Aorta (tissue), 5 donors: ENCODE measurements at regions of chr4 and their contacts with region 1.

Region 1: GRCh38 chr4:140326395-140326993 is 47.0 kb upstream of the SCOC start:
- DNase-seq: no peak
- ATAC-seq: no peak
- H3K4me3 ChIP-seq: no peak overlapping the region
- H3K27ac ChIP-seq: no peak overlapping the region
- H3K4me1 ChIP-seq: no peaks in the 10 kb centered on the region
- H3K27me3 ChIP-seq: no peaks in the 10 kb centered on the region

Region 2: DNA sequence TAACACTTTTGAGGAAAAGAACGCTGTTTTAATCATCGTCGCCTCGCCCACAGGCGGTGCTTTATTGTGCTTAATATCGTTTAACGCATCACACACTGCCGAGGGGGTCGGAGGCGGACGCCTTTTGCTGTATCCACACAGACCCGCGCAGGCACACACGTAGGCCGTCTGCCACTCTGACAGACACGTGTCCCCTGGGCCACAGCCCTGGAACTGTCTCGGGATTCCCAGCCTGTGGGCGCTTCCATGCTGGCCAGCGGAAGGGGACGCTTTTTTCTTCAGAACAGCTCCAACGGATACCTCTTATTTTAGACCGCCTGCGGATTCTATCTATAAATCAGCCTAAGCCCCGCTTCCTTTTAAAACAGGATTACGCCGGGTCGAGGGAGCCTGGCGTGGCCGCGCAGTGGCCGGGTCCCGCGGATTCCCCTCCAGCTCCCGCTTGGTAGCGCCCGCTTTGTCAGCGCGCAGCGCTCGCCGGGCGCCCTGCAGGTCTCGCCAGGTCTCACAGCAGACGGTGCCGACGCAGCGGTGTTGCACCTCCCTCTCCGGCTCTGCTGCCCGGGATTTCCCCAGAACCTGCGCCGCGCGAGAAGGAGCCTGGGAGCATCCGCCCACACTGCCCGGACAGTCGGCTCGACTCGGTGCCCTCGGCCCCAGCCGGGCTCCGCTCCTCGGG is 1311.1 kb before region 1 on chr4 and contains the start of gene NOCT:
- intact Hi-C with region 1: no loop called
- DNase-seq: peak; percentile 93 to 96
- ATAC-seq: peak; percentile 96
- H3K4me3 ChIP-seq: peak within 1 kb of the TSS; percentile 58 to 88
- H3K27ac ChIP-seq: peak within 1 kb of the TSS; percentile 29 to 92
- H3K4me1 ChIP-seq: no peaks in the 10 kb centered on the region
- H3K27me3 ChIP-seq: no peaks in the 10 kb centered on the region
- total RNA-seq, gene NOCT: 5.1 to 6.9 TPM

Region 3: GRCh38 chr4:139651282-139652194 is 675.0 kb before region 1 on chr4:
- intact Hi-C with region 1: loop called in 1 of 2 experiments (anchors 10 kb)
- DNase-seq: peak; percentile 89 to 92
- ATAC-seq: peak; percentile 91
- H3K4me3 ChIP-seq: no peak overlapping the region
- H3K27ac ChIP-seq: no peak overlapping the region
- H3K4me1 ChIP-seq: no peaks in the 10 kb centered on the region
- H3K27me3 ChIP-seq: no peaks in the 10 kb centered on the region

Region 4: GRCh38 chr4:139734875-139735380 is 591.6 kb before region 1 on chr4:
- intact Hi-C with region 1: loop called (anchors 5 to 10 kb)
- DNase-seq: peak; percentile 89 to 95
- ATAC-seq: peak; percentile 98
- H3K4me3 ChIP-seq: peak overlapping the region; percentile 57 to 72
- H3K27ac ChIP-seq: peak overlapping the region in 1 of 2 donors; percentile 2
- H3K4me1 ChIP-seq: peaks cover under 1 to 2% of the 10 kb centered on the region in 2 donors
- H3K27me3 ChIP-seq: no peaks in the 10 kb centered on the region

Region 5: GRCh38 chr4:140012688-140013486 is 313.6 kb before region 1 on chr4:
- intact Hi-C with region 1: loop called in 1 of 2 experiments (anchors 10 kb)
- DNase-seq: peak in 1 of 2 donors; percentile 62
- ATAC-seq: peak; percentile 71
- H3K4me3 ChIP-seq: no peak overlapping the region
- H3K27ac ChIP-seq: no peak overlapping the region
- H3K4me1 ChIP-seq: no peaks in the 10 kb centered on the region
- H3K27me3 ChIP-seq: no peaks in the 10 kb centered on the region

Region 6: DNA sequence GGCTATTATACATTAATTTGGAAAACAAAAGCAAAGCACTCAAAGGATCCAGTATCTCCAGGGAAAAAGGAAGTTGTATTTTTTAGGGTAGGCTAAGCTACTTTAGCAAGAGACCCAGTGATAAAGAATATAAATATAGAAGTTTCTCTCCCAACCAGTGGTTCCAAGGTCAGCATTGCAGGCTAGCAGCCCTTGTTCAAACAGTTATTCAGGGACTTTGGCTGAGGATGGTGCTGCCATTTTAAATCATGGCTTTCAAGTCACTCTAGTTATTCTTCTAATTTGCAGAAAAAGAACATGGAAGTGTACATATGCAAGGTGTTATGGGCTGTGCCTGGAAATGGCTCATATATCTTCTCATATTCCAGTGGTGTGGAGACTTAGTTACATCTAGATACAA is 56.2 kb after region 1 on chr4:
- intact Hi-C with region 1: no loop called
- DNase-seq: no peak
- ATAC-seq: no peak
- H3K4me3 ChIP-seq: no peak overlapping the region
- H3K27ac ChIP-seq: no peak overlapping the region
- H3K4me1 ChIP-seq: no peaks in the 10 kb centered on the region
- H3K27me3 ChIP-seq: no peaks in the 10 kb centered on the region

Region 7: GRCh38 chr4:140423106-140423505 is 96.6 kb after region 1 on chr4:
- intact Hi-C with region 1: no loop called
- DNase-seq: no peak
- ATAC-seq: no peak
- H3K4me3 ChIP-seq: no peak overlapping the region
- H3K27ac ChIP-seq: no peak overlapping the region
- H3K4me1 ChIP-seq: no peaks in the 10 kb centered on the region
- H3K27me3 ChIP-seq: no peaks in the 10 kb centered on the region